ENCODE measurements at regions of chr3 and their contacts with region 1.

Region 1: DNA sequence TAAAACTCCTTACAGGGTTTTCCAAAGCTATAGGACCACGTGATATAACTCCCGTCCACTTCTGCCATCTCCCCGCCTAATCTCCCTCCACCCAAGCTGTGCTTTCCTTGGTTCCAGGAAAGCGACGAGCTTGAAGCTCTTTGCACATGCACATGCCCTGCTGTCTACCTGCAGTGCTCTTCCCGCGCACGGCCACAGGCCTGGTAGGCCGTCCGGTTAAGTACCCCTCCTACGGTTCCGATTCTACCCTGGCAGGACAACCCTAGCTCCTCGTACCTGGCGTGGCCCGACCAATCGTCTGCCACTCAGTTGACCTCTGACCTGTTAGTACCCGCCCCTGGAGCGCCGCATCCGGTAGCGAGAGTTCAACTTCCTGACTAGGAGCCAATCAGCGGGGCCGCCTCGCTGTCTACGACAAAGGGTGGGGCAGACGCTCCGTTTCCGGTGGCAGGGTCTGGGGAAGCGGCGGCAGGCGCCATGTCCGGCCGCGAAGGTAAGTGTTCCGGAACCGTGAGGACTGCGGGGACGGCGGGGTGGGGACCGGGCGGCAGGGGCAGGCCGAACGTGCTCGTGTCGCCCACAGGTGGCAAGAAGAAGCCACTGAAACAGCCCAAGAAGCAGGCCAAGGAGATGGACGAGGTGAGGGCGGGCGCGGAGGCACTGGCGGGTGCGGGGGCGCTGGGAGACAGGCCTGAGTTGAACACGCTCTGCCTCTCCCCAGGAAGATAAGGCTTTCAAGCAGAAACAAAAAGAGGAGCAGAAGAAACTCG is at the starts of genes CCDC51 and TMA7:
- DNase-seq: peak; percentile 99
- ATAC-seq: peak; percentile 96
- H3K4me3 ChIP-seq: peak within 1 kb of the TSS; percentile 92
- H3K4me1 ChIP-seq: peaks cover 19% of the 10 kb centered on the region
- CTCF ChIP-seq: no peak
- total RNA-seq, gene CCDC51: 13.0 to 15.3 (median 14.8) TPM
- total RNA-seq, gene TMA7: 130 to 193 (median 153) TPM

Region 2: DNA sequence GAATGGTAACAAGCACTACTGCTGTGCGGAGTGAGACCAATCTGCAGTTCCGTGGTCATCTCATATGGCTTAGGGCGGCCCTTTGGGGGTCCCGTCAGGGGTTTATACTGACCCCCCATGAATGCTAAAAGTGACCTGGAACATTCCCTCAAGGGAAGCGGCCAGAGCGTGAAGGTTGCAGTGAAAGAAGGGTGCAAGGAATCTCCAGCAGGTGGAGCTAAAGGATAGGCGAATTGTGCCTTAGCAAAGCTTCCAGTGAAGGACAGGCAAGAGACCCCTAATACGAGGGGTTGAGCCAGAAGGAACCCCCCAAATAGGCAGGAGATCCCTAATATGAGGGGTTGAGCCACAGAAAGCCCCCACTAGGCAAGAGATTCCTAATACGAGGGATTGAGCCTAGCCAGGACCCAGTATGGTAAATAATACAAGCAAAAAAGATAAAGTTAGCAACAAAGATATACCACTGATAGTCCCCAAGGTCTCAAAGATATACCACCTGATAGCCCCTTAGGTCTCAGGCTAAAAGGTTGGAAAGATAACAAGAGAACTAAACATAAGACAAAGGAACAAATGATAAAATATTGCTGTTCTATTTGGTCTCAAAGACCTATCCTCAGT is 166.3 kb before region 1 on chr3:
- intact Hi-C with region 1: loop called in 1 of 2 experiments (anchors 5 kb)
- DNase-seq: peak in 2 of 3 donors; percentile 36 to 82
- ATAC-seq: peak; percentile 61
- H3K4me3 ChIP-seq: no peak overlapping the region
- H3K4me1 ChIP-seq: peaks cover 10% of the 10 kb centered on the region
- CTCF ChIP-seq: peak; percentile 52

Region 3: GRCh38 chr3:48400824-48401433 is 39.1 kb before region 1 on chr3:
- intact Hi-C with region 1: loop called (anchors 2 to 5 kb)
- DNase-seq: peak in 2 of 3 donors; percentile 45 to 60
- ATAC-seq: peak; percentile 79
- H3K4me3 ChIP-seq: no peak overlapping the region
- H3K4me1 ChIP-seq: no peaks in the 10 kb centered on the region
- CTCF ChIP-seq: peak; percentile 45

Region 4: DNA sequence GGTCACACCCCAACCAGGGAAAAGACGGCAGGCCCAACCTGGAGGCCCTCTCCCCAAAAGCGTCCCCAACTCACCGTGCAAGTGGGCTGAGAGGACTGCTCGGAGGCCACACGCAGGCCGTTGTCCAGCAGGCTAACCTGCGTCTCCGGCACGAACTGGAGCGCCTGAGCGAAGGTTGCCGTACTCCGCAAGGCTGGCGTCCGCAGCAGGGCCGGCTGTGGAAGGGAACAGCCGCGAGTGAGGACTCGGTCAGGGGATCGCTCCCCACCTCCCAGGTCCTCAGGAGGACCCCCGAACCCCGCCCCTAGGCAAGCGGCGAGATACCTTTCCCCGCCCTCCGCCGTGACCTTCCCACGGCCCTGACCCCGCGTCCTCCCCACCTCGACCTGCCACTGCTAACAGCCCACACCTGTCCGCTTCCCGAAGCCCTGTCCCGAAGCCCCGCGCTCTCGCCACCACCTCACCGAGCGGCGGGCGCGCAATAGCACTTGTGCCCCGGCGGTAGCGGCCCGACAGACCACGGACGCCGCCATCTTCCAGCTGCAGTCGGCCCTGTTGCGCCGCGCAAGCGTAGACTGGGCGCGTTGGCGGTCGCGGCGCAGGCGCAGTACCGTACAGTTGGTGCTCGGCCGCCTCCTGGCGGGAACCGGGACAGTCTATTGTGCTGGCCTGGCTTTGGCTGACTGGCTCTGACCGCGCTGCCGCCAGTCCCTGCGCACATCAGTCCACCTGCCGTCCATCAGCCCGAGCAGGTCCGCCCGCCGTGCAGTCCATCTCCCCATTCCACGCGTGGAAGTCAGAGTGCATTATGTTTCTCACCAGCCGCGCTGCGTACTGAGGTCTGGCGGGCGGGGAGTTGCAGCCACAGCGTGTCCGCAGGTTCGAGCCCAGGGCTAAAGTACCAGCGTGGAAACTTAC is 169.3 kb after region 1 on chr3 and contains the start of gene UQCRC1:
- intact Hi-C with region 1: no loop called
- DNase-seq: peak; percentile 92 to 96 (median 94)
- ATAC-seq: peak; percentile 99
- H3K4me3 ChIP-seq: peak within 1 kb of the TSS; percentile 89
- H3K4me1 ChIP-seq: peaks cover 6% of the 10 kb centered on the region
- CTCF ChIP-seq: peak; percentile 61
- total RNA-seq, gene UQCRC1: 384 to 562 (median 554) TPM

Region 5: GRCh38 chr3:48966876-48967361 is 526.9 kb after region 1 on chr3:
- intact Hi-C with region 1: no loop called
- DNase-seq: peak; percentile 66 to 67 (median 67)
- ATAC-seq: peak; percentile 77
- H3K4me3 ChIP-seq: no peak overlapping the region
- H3K4me1 ChIP-seq: peaks cover 22% of the 10 kb centered on the region
- CTCF ChIP-seq: no peak

Measured in mucosa of descending colon (tissue), 3 donors.